A673 (cell line): ENCODE measurements at regions of chr18 and their contacts with region 1.

Region 1: GRCh38 chr18:68735483-68736343 is 20.8 kb upstream of the TMX3 start:
- DNase-seq: peak; percentile 78
- H3K4me3 ChIP-seq: no peak overlapping the region
- H3K27ac ChIP-seq: no peak overlapping the region
- H3K4me1 ChIP-seq: peaks cover 18% of the 10 kb centered on the region
- H3K27me3 ChIP-seq: no peaks in the 10 kb centered on the region
- CTCF ChIP-seq: peak; percentile 91

Region 2: GRCh38 chr18:67854340-67854739 is 881.4 kb before region 1 on chr18:
- CTCF ChIA-PET with region 1: no interaction called
- POLR2A ChIA-PET with region 1: no interaction called
- intact Hi-C with region 1: no loop called
- DNase-seq: no peak
- H3K4me3 ChIP-seq: no peak overlapping the region
- H3K27ac ChIP-seq: no peak overlapping the region
- H3K4me1 ChIP-seq: no peaks in the 10 kb centered on the region
- H3K27me3 ChIP-seq: no peaks in the 10 kb centered on the region
- CTCF ChIP-seq: no peak

Region 3: GRCh38 chr18:68608851-68609490 is 126.7 kb before region 1 on chr18:
- CTCF ChIA-PET with region 1: no interaction called
- POLR2A ChIA-PET with region 1: no interaction called
- intact Hi-C with region 1: no loop called
- DNase-seq: no peak
- H3K4me3 ChIP-seq: no peak overlapping the region
- H3K27ac ChIP-seq: no peak overlapping the region
- H3K4me1 ChIP-seq: no peaks in the 10 kb centered on the region
- H3K27me3 ChIP-seq: no peaks in the 10 kb centered on the region
- CTCF ChIP-seq: no peak

Region 4: DNA sequence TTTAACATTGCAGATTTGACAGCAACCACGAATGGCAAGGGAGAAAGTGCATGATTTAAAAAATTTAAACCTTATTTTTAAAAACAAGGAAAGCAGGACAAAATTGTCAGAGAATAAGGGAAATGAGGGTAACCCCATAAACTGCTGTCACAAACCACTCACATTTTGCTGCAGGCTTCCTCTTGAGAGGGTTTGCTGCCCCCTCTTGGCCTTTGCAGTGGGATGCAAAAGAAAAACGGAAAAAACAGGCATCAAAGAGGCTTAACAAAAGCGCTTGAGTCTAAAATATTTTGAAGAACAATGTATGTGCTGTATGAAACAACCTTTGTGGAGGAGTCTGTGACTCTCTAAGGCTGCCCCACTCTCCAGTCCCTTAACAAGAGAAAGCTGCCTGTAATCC is 112.4 kb before region 1 on chr18:
- CTCF ChIA-PET with region 1: no interaction called
- POLR2A ChIA-PET with region 1: no interaction called
- intact Hi-C with region 1: loop called (anchors 10 kb)
- DNase-seq: peak; percentile 92
- H3K4me3 ChIP-seq: no peak overlapping the region
- H3K27ac ChIP-seq: peak overlapping the region; percentile 57
- H3K4me1 ChIP-seq: peaks cover 16% of the 10 kb centered on the region
- H3K27me3 ChIP-seq: no peaks in the 10 kb centered on the region
- CTCF ChIP-seq: peak; percentile 85

Region 5: DNA sequence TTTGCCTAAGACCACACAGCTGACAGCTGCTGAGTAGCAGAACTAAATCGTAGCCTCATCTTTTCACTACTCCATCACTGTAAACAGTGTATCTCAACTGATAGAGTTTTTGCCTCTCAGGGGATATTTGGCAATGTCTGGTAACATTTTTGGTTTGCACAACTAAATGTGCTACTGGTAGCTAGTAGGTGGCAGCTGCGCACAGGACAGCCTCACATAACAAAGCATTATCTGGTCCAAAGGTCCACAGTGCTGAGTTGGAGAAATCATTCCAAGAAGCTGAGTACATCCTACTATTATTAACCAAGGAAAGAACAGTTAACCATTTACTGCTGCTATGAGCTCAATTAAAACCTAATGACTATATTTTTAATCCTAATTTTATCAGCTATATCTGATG is 56.1 kb after region 1 on chr18:
- CTCF ChIA-PET with region 1: no interaction called
- POLR2A ChIA-PET with region 1: no interaction called
- intact Hi-C with region 1: no loop called
- DNase-seq: no peak
- H3K4me3 ChIP-seq: no peak overlapping the region
- H3K27ac ChIP-seq: no peak overlapping the region
- H3K4me1 ChIP-seq: no peaks in the 10 kb centered on the region
- H3K27me3 ChIP-seq: no peaks in the 10 kb centered on the region
- CTCF ChIP-seq: no peak

Region 6: GRCh38 chr18:68840554-68841263 is 105.0 kb after region 1 on chr18:
- CTCF ChIA-PET with region 1: no interaction called
- POLR2A ChIA-PET with region 1: no interaction called
- intact Hi-C with region 1: loop called (anchors 5 kb)
- DNase-seq: peak; percentile 92
- H3K4me3 ChIP-seq: no peak overlapping the region
- H3K27ac ChIP-seq: peak overlapping the region; percentile 78
- H3K4me1 ChIP-seq: peaks cover 63% of the 10 kb centered on the region
- H3K27me3 ChIP-seq: no peaks in the 10 kb centered on the region
- CTCF ChIP-seq: no peak